GM18951 (cell line): ENCODE measurements at regions of chr6 and their contacts with region 1.

Region 1: DNA sequence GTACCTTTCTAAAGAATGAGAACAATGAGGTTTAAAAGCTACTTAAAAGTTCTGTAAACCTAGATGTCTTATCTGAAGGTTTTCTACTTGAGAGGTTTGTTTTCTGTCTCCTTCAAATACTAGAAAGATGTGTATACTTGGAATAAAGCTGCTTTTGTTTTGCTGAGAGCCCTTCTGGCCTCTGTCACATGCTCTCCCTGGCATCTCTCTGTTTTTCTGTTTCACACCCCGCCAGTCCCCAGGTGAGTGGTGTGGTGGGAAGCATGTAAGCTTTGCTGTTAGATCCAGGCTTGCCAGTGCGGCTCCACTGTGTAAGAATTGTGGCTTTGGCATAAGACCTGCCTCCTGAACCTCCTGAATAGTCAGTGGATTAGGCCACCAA is 56.8 kb downstream of the SNX9 start:
- POLR2A ChIP-seq: no peak

Region 2: DNA sequence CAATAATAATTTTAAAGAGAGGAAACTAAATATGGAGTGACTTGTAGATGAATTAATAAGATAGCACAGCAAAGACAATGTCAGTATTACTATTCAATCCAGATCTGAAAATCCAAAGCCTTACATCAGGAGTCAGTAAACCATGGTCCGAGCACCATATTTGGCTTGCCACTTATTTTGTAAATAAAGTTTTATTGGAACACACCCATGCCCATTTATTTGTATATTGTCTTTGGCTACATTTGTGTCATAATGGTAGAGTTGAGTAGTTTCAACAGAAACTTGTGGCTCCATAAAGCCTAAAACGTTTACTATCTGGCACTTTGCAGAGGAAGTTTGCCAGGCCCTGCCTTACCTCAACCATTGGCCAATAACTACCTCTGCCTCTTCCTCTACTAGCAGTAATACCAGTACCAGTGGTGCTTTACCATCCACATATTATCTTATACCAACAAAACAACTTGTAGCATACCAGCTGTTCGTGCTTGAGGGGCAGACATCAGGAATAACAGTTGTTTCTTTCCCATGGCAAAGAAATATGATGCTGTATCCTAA is 50.0 kb after region 1 on chr6:
- in situ Hi-C with region 1: loop called (anchors 10 kb)
- POLR2A ChIP-seq: no peak

Region 3: GRCh38 chr6:157962601-157963302 is 82.9 kb after region 1 on chr6:
- in situ Hi-C with region 1: no loop called
- POLR2A ChIP-seq: no peak